B cell (primary cell): ENCODE measurements at regions of chr7 and their contacts with region 1.

Region 1: GRCh38 chr7:92421676-92422435 is 25.4 kb upstream of the GATAD1 start:
- DNase-seq: no peak
- ATAC-seq: no peak
- H3K4me3 ChIP-seq: no peak overlapping the region
- H3K4me3 Mint-ChIP-seq: no peak overlapping the region
- H3K27ac ChIP-seq: no peak overlapping the region
- H3K27ac Mint-ChIP-seq: no peak overlapping the region
- H3K4me1 ChIP-seq: peaks cover 4% of the 10 kb centered on the region in 2 donors
- H3K4me1 Mint-ChIP-seq: peaks cover 10% of the 10 kb centered on the region
- H3K27me3 ChIP-seq: peaks cover 0 to 6% (median 0%) of the 10 kb centered on the region in 4 experiments
- H3K27me3 Mint-ChIP-seq: peaks cover 20% of the 10 kb centered on the region
- CTCF ChIP-seq: no peak

Region 2: DNA sequence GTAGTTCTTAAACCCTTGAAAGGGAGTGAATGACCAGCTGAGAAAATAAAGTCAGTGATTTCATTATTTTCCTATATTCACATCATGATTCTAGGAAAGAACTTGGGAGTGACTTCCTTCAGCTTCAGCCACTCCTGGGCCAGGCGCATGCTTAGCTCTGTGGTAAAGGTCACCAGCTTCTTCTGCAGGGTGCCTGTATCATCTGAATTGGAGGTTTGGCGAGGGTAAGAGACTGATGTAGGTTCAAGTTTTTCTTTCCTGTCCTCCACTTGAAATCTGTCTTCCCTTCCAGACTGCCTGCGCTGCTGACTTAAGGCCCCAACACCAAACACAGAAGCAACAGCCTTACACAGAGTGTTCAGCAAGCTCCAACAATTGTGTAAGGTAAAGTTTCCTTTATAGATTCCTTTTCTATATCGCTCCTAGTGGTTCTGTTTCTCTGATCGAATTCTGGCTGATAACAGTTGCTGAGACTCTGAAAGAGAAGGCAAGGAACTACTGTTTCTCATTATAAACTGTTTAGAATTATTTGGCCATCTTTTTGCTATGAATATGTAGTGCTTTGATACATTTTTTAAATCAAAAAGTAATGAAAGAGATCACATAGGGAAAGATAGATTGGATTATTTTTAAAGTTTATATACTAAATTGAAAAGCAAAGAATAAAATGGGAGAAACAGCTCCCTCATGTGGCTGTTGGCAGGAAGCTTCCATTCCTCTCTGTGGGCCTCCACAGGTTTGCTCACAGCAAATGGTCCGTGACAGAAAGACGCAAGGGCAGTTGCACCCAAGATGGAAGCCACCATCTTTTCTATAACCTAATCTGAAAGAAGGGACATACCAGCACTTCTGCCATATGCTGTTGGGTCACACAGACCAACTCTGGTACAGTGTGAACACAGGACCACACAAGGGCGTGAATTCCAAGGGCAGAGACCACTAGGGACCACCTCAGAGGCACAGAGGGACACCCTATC is 39.5 kb after region 1 on chr7:
- CTCF ChIA-PET with region 1: interaction called, 12 read pairs
- POLR2A ChIA-PET with region 1: no interaction called
- intact Hi-C with region 1: loop called (anchors 5 kb)
- DNase-seq: peak; percentile 32
- ATAC-seq: no peak
- H3K4me3 ChIP-seq: no peak overlapping the region
- H3K4me3 Mint-ChIP-seq: no peak overlapping the region
- H3K27ac ChIP-seq: no peak overlapping the region
- H3K27ac Mint-ChIP-seq: no peak overlapping the region
- H3K4me1 ChIP-seq: no peaks in the 10 kb centered on the region
- H3K4me1 Mint-ChIP-seq: no peaks in the 10 kb centered on the region
- H3K27me3 ChIP-seq: no peaks in the 10 kb centered on the region
- H3K27me3 Mint-ChIP-seq: no peaks in the 10 kb centered on the region
- CTCF ChIP-seq: peak; percentile 78

Region 3: GRCh38 chr7:92691578-92691977 is 269.7 kb after region 1 on chr7:
- CTCF ChIA-PET with region 1: no interaction called
- POLR2A ChIA-PET with region 1: no interaction called
- intact Hi-C with region 1: no loop called
- DNase-seq: peak; percentile 60
- ATAC-seq: peak; percentile 66
- H3K4me3 ChIP-seq: no peak overlapping the region
- H3K4me3 Mint-ChIP-seq: no peak overlapping the region
- H3K27ac ChIP-seq: no peak overlapping the region
- H3K27ac Mint-ChIP-seq: no peak overlapping the region
- H3K4me1 ChIP-seq: no peaks in the 10 kb centered on the region
- H3K4me1 Mint-ChIP-seq: peaks cover 6% of the 10 kb centered on the region
- H3K27me3 ChIP-seq: no peaks in the 10 kb centered on the region
- H3K27me3 Mint-ChIP-seq: no peaks in the 10 kb centered on the region
- CTCF ChIP-seq: peak; percentile 74